Naive thymus-derived CD8-positive, alpha-beta T cell (primary cell): ENCODE measurements at regions of chr16 and their contacts with region 1.

Region 1: GRCh38 chr16:50301626-50302471 is 35.5 kb downstream of the ADCY7 start:
- DNase-seq: peak in 1 of 10 donors; percentile 56
- ATAC-seq: no peak
- H3K4me3 Mint-ChIP-seq: no peak overlapping the region
- H3K27ac Mint-ChIP-seq: peak overlapping the region in 2 of 10 donors; percentile 43 to 68
- H3K4me1 Mint-ChIP-seq: peaks cover 0 to 3% (median 1%) of the 10 kb centered on the region in 4 donors
- H3K27me3 Mint-ChIP-seq: no peaks in the 10 kb centered on the region

Region 2: DNA sequence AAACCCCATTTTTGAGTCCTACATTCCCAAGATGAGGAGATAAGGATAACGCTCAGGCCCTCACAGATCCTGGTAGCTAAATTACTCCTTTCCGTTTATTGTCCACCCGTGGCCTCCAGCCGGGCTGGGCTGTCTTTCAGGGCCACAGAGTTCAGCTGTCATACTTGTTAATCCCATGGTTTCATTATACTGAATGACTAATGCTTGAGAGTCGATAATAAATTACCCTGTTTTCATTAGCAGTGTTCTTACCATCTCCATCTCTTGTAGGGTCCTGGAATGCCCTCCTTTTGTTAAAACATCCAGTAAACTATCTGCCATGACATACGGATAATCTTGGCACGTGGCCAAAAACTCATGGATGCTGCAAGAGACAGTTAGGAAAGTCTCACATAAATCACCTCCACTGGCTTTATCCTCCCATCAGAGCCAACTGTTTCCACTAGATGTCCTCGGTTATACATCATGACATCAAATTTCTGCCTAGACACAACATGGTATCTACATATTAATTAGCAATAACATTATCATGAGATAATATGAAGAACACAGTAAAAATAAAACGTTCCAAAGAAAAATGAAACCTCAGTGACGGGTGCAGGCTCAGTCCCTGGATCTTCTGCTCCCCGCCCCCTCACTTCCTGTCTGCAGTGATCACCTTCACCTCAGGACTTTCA is 21.6 kb after region 1 on chr16:
- POLR2A ChIA-PET with region 1: interaction called, 10 read pairs
- DNase-seq: peak in 3 of 10 donors; percentile 14 to 29 (median 15)
- ATAC-seq: no peak
- H3K4me3 Mint-ChIP-seq: no peak overlapping the region
- H3K27ac Mint-ChIP-seq: peak overlapping the region; percentile 74 to 94 (median 88)
- H3K4me1 Mint-ChIP-seq: peaks cover 28 to 46% (median 38%) of the 10 kb centered on the region in 4 donors
- H3K27me3 Mint-ChIP-seq: no peaks in the 10 kb centered on the region

Region 3: DNA sequence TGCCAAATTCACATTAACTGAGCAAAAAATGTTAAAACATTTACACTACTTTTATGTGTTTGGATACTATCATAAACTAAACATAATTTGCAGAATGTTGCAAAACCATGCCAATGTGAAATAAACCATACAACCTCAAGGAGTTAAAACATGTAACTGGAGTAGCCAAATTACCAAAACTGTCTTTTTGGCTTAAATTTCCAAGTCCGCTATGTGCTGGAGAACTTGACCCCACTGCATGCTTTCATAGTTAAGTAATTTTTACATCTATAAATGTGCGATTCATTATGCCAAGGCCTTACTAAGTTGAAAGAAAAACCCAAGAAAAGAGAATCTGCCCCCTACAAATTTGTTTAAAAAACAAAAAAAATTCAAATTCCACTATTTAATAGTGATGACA is 38.7 kb after region 1 on chr16:
- POLR2A ChIA-PET with region 1: no interaction called
- DNase-seq: no peak
- ATAC-seq: no peak
- H3K4me3 Mint-ChIP-seq: no peak overlapping the region
- H3K27ac Mint-ChIP-seq: peak overlapping the region in 3 of 10 donors; percentile 38 to 83 (median 66)
- H3K4me1 Mint-ChIP-seq: peaks cover 19 to 29% (median 27%) of the 10 kb centered on the region in 4 donors
- H3K27me3 Mint-ChIP-seq: no peaks in the 10 kb centered on the region